ENCODE measurements at regions of chr18 and their contacts with region 1.

Region 1: GRCh38 chr18:37166491-37166890 is 337.6 kb downstream of the KIAA1328 start:
- DNase-seq: no peak
- H3K4me3 Mint-ChIP-seq: no peak overlapping the region
- H3K27ac Mint-ChIP-seq: no peak overlapping the region
- H3K4me1 Mint-ChIP-seq: no peaks in the 10 kb centered on the region
- H3K27me3 Mint-ChIP-seq: no peaks in the 10 kb centered on the region

Region 2: GRCh38 chr18:37144921-37145320 is 21.6 kb before region 1 on chr18:
- CTCF ChIA-PET with region 1: interaction called, 3 read pairs
- intact Hi-C with region 1: loop called (anchors 1 kb)
- DNase-seq: no peak
- H3K4me3 Mint-ChIP-seq: no peak overlapping the region
- H3K27ac Mint-ChIP-seq: no peak overlapping the region
- H3K4me1 Mint-ChIP-seq: no peaks in the 10 kb centered on the region
- H3K27me3 Mint-ChIP-seq: no peaks in the 10 kb centered on the region

Region 3: GRCh38 chr18:37207343-37207742 is 40.9 kb after region 1 on chr18:
- CTCF ChIA-PET with region 1: no interaction called
- intact Hi-C with region 1: no loop called
- DNase-seq: no peak
- H3K4me3 Mint-ChIP-seq: no peak overlapping the region
- H3K27ac Mint-ChIP-seq: no peak overlapping the region
- H3K4me1 Mint-ChIP-seq: no peaks in the 10 kb centered on the region
- H3K27me3 Mint-ChIP-seq: no peaks in the 10 kb centered on the region